ENCODE measurements at regions of chr12 and their contacts with region 1.

Region 1: GRCh38 chr12:46468159-46468558 is 95.6 kb upstream of the SLC38A2 start:
- DNase-seq: no peak
- ATAC-seq: no peak
- H3K4me3 ChIP-seq: no peak overlapping the region
- H3K4me3 Mint-ChIP-seq: no peak overlapping the region
- H3K27ac ChIP-seq: no peak overlapping the region
- H3K27ac Mint-ChIP-seq: no peak overlapping the region
- H3K4me1 ChIP-seq: peaks cover 15% of the 10 kb centered on the region
- H3K4me1 Mint-ChIP-seq: peaks cover 17% of the 10 kb centered on the region
- H3K27me3 ChIP-seq: no peaks in the 10 kb centered on the region
- H3K27me3 Mint-ChIP-seq: no peaks in the 10 kb centered on the region
- CTCF ChIP-seq: no peak

Region 2: DNA sequence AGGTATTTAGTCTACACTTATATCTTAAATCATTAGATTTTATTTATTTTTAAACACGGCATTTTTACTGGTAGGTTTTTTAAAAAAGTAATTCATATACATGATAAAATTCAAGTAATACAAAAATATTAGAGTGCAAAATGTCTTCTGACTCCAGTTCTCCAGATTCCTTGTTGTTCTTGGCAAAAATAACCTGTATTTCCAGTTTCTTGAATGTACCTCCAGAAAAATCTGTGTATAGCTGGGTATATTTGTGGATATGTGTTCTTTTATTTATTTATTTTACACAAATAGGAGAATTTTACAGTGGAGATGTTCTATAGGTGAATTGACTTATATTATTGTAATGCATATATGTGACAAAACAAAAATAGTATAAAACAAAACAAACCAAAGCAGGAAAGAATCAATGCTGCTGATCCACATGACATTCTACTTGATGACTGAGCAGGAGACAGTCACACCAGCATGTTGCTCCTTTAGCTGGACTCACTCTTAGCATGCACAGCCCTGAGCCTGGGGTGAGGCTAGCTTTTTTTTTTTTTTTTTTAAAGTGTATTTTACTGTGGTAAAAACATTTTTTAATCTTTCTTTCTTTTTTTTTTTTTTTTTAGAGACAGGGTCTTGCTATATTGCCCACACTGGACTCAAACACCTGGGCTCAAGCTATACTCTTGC is 53.4 kb before region 1 on chr12:
- CTCF ChIA-PET with region 1: no interaction called
- POLR2A ChIA-PET with region 1: no interaction called
- intact Hi-C with region 1: loop called in 1 of 2 experiments (anchors 5 kb)
- DNase-seq: no peak
- ATAC-seq: no peak
- H3K4me3 ChIP-seq: no peak overlapping the region
- H3K4me3 Mint-ChIP-seq: no peak overlapping the region
- H3K27ac ChIP-seq: no peak overlapping the region
- H3K27ac Mint-ChIP-seq: no peak overlapping the region
- H3K4me1 ChIP-seq: no peaks in the 10 kb centered on the region
- H3K4me1 Mint-ChIP-seq: no peaks in the 10 kb centered on the region
- H3K27me3 ChIP-seq: no peaks in the 10 kb centered on the region
- H3K27me3 Mint-ChIP-seq: no peaks in the 10 kb centered on the region
- CTCF ChIP-seq: no peak

Region 3: DNA sequence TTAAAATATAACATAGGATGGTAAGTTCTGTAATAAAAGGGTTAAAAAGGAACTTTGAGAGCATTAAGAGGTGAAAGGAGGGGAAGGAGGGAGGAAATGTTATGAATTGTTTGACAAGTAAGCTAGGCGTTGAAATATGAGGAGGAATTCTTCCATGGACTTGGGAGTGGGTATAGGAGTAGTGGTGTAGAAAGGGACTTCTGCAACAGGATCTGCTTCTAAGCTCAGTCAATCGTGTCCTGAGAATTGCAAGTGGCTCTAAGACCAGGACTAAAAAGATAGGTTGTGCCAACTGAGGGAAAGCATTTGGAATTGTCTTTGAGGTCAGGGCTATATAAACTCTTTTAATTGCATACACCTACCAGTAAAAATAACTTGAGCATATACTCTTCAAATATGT is 21.5 kb before region 1 on chr12:
- CTCF ChIA-PET with region 1: no interaction called
- POLR2A ChIA-PET with region 1: no interaction called
- intact Hi-C with region 1: no loop called
- DNase-seq: no peak
- ATAC-seq: no peak
- H3K4me3 ChIP-seq: no peak overlapping the region
- H3K4me3 Mint-ChIP-seq: no peak overlapping the region
- H3K27ac ChIP-seq: no peak overlapping the region
- H3K27ac Mint-ChIP-seq: no peak overlapping the region
- H3K4me1 ChIP-seq: peaks cover 22% of the 10 kb centered on the region
- H3K4me1 Mint-ChIP-seq: peaks cover 26% of the 10 kb centered on the region
- H3K27me3 ChIP-seq: no peaks in the 10 kb centered on the region
- H3K27me3 Mint-ChIP-seq: no peaks in the 10 kb centered on the region
- CTCF ChIP-seq: no peak

Region 4: DNA sequence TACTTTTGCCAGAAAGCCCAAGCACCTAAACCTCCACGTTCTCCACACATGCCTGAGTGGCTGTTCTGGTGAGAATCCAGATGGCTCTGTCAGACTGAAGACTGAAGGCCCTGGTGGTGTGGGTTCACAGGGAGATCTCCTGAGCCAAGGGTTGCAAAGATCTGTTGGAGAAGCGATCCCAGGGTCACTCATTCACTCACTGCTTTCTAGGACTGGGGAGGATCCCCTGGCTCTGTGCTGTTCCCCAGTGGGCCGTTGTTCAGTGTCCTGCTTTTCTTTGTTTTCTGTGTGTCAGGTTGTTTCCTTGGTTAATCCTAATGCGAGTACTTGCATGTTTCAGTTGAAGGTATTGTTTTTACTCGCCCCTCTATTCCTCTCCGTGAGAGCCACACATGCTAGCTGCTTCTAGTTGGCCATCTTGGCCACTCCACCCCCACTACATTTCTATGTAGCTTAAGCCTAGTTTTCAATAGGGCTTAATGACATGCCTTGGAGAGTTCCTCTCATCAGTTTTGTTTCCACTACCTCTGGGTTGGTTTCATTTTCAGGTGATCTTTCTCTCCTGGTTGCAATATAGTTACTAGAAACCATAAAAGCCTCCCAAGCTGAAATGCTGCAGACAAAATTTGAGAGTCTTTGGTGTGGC is 48.9 kb after region 1 on chr12:
- CTCF ChIA-PET with region 1: no interaction called
- POLR2A ChIA-PET with region 1: no interaction called
- intact Hi-C with region 1: loop called in 1 of 2 experiments (anchors 5 kb)
- DNase-seq: peak in 1 of 9 experiments; percentile 24
- ATAC-seq: no peak
- H3K4me3 ChIP-seq: no peak overlapping the region
- H3K4me3 Mint-ChIP-seq: peak overlapping the region; percentile 33
- H3K27ac ChIP-seq: no peak overlapping the region
- H3K27ac Mint-ChIP-seq: peak overlapping the region; percentile 64
- H3K4me1 ChIP-seq: peaks cover 22% of the 10 kb centered on the region
- H3K4me1 Mint-ChIP-seq: peaks cover 50% of the 10 kb centered on the region
- H3K27me3 ChIP-seq: no peaks in the 10 kb centered on the region
- H3K27me3 Mint-ChIP-seq: no peaks in the 10 kb centered on the region
- CTCF ChIP-seq: no peak

Region 5: GRCh38 chr12:46675736-46676135 is 207.6 kb after region 1 on chr12:
- CTCF ChIA-PET with region 1: no interaction called
- POLR2A ChIA-PET with region 1: no interaction called
- intact Hi-C with region 1: no loop called
- DNase-seq: peak in 2 of 9 experiments; percentile 31 to 40
- ATAC-seq: no peak
- H3K4me3 ChIP-seq: no peak overlapping the region
- H3K4me3 Mint-ChIP-seq: no peak overlapping the region
- H3K27ac ChIP-seq: no peak overlapping the region
- H3K27ac Mint-ChIP-seq: no peak overlapping the region
- H3K4me1 ChIP-seq: no peaks in the 10 kb centered on the region
- H3K4me1 Mint-ChIP-seq: no peaks in the 10 kb centered on the region
- H3K27me3 ChIP-seq: no peaks in the 10 kb centered on the region
- H3K27me3 Mint-ChIP-seq: no peaks in the 10 kb centered on the region
- CTCF ChIP-seq: peak; percentile 72